Cardiac septum (tissue), 1 donor: ENCODE measurements at regions of chr4 and their contacts with region 1.

Region 1: GRCh38 chr4:78517050-78517652 is 34.4 kb upstream of the ANXA3 start:
- DNase-seq: no peak

Region 2: GRCh38 chr4:77959566-77960338 is 557.4 kb before region 1 on chr4:
- intact Hi-C with region 1: loop called (anchors 5 kb)
- DNase-seq: no peak

Region 3: GRCh38 chr4:77994194-77994721 is 522.9 kb before region 1 on chr4:
- intact Hi-C with region 1: loop called (anchors 5 kb)
- DNase-seq: no peak

Region 4: GRCh38 chr4:78061939-78062570 is 455.1 kb before region 1 on chr4:
- intact Hi-C with region 1: loop called (anchors 2 kb)
- DNase-seq: no peak